T-cell (primary cell): ENCODE measurements at regions of chr7 and their contacts with region 1.

Region 1: GRCh38 chr7:4661871-4662270 is 20.2 kb upstream of the FOXK1 start:
- DNase-seq: no peak
- ATAC-seq: no peak
- H3K4me3 ChIP-seq: no peak overlapping the region
- H3K4me3 Mint-ChIP-seq: no peak overlapping the region
- H3K27ac ChIP-seq: no peak overlapping the region
- H3K27ac Mint-ChIP-seq: no peak overlapping the region
- H3K4me1 ChIP-seq: no peaks in the 10 kb centered on the region
- H3K4me1 Mint-ChIP-seq: peaks cover 0 to 3% (median 0%) of the 10 kb centered on the region in 3 donors
- H3K27me3 ChIP-seq: peaks cover 0 to 10% of the 10 kb centered on the region in 2 experiments
- H3K27me3 Mint-ChIP-seq: peaks cover 0 to 4% of the 10 kb centered on the region in 2 donors

Region 2: GRCh38 chr7:4693152-4693551 is 31.3 kb after region 1 on chr7:
- CTCF ChIA-PET with region 1: no interaction called
- POLR2A ChIA-PET with region 1: interaction called, 3 to 12 read pairs
- DNase-seq: no peak
- ATAC-seq: no peak
- H3K4me3 ChIP-seq: no peak overlapping the region
- H3K4me3 Mint-ChIP-seq: no peak overlapping the region
- H3K27ac ChIP-seq: no peak overlapping the region
- H3K27ac Mint-ChIP-seq: no peak overlapping the region
- H3K4me1 ChIP-seq: peaks cover 16 to 47% of the 10 kb centered on the region in 2 experiments
- H3K4me1 Mint-ChIP-seq: peaks cover 73 to 78% (median 74%) of the 10 kb centered on the region in 3 donors
- H3K27me3 ChIP-seq: no peaks in the 10 kb centered on the region
- H3K27me3 Mint-ChIP-seq: no peaks in the 10 kb centered on the region

Region 3: GRCh38 chr7:5320802-5321396 is 659.0 kb after region 1 on chr7:
- CTCF ChIA-PET with region 1: no interaction called
- POLR2A ChIA-PET with region 1: no interaction called
- DNase-seq: no peak
- ATAC-seq: no peak
- H3K4me3 ChIP-seq: no peak overlapping the region
- H3K4me3 Mint-ChIP-seq: no peak overlapping the region
- H3K27ac ChIP-seq: no peak overlapping the region
- H3K27ac Mint-ChIP-seq: no peak overlapping the region
- H3K4me1 ChIP-seq: no peaks in the 10 kb centered on the region
- H3K4me1 Mint-ChIP-seq: no peaks in the 10 kb centered on the region
- H3K27me3 ChIP-seq: no peaks in the 10 kb centered on the region
- H3K27me3 Mint-ChIP-seq: no peaks in the 10 kb centered on the region